A673 (cell line): ENCODE measurements at regions of chr20 and their contacts with region 1.

Region 1: GRCh38 chr20:51022803-51023630 is at the start of gene KCNG1:
- DNase-seq: peak; percentile 90
- H3K4me3 ChIP-seq: peak within 1 kb of the TSS; percentile 64
- H3K27ac ChIP-seq: peak within 1 kb of the TSS; percentile 69
- H3K4me1 ChIP-seq: peaks cover 27% of the 10 kb centered on the region
- H3K27me3 ChIP-seq: no peaks in the 10 kb centered on the region
- CTCF ChIP-seq: no peak
- total RNA-seq, gene KCNG1: 19.6 and 22.7 TPM in 2 replicates

Region 2: DNA sequence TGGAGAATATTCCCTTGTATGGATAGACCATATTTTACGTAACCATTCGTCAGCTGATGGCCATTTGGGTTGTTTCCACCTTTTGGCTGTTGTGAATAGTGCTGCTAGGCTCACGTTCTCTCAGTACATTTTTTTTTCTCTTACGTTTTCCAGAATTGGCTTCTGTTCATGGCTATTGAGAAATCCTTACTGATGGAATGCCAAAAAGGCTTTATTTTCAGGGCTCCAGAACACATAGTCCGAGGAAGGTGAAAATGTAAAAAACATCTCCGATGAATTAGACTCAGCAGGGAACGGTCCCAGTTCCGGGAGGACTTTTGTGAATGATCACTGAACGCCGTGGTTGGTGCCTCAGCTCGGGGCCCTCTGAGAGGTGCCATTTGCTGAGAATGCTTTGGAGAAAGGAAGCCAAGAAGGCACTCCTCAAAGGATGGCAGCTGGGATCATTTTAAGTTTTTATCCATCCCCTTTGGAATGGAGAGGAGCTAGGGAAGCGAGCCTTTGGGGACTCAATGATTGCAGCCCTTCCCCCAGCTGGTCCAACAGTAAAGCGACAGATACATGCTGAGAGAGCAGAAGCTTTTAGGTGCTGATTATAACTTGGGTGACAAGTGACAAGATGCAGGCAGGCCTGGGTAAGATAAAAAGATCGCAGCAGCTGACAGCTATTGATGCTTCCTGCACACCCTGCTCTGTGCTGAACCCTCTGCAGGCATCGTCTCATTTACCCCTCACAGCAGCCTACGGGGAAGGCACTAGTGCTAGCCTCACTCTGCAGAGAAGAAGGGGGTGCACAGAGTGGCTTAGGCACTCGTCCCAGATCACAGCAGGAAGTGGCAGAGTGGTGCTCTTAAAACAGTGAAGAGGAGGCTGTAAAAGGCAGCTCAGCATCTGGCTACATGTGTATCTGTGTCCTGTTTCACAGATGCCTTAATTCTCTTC is 133.3 kb after region 1 on chr20:
- CTCF ChIA-PET with region 1: no interaction called
- POLR2A ChIA-PET with region 1: no interaction called
- intact Hi-C with region 1: loop called (anchors 10 kb)
- DNase-seq: peak; percentile 76
- H3K4me3 ChIP-seq: no peak overlapping the region
- H3K27ac ChIP-seq: no peak overlapping the region
- H3K4me1 ChIP-seq: peaks cover 13% of the 10 kb centered on the region
- H3K27me3 ChIP-seq: peaks cover 13% of the 10 kb centered on the region
- CTCF ChIP-seq: no peak